ENCODE measurements at regions of chr7 and their contacts with region 1.

Region 1: DNA sequence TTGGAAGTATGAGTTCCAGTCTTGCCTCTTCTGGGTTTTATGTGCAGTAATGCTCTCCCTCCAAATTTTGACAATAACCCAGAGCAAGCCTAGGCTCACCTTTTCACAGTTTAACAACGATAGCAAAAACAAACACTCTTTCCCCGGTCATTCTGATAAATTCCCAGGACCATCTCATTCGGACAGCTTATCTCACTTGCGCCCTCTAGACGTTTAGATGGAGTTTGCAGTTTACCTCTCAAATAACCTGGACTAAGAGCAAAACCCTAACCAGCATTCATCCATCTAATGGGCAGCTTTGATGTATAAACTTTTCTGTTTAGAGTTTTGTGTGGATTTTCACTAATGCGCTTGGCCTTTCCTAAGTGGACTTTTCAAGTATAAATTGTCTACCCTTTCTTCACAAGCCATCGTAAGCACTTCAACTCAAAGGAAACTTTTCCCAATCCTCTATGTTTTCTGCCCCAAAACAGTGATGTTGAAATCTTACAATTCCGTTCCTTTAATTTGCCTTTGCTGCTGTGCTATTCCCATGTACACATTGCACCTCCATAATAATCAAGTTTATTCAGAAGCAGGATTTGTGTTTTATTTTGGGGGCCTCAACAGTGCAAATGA is 114.9 kb downstream of the HDAC9 start:
- DNase-seq: peak; percentile 38
- H3K4me3 ChIP-seq: no peak overlapping the region
- H3K27ac ChIP-seq: no peak overlapping the region
- H3K4me1 ChIP-seq: no peaks in the 10 kb centered on the region
- H3K27me3 ChIP-seq: no peaks in the 10 kb centered on the region
- CTCF ChIP-seq: peak; percentile 52 to 66
- POLR2A ChIP-seq: no peak

Region 2: DNA sequence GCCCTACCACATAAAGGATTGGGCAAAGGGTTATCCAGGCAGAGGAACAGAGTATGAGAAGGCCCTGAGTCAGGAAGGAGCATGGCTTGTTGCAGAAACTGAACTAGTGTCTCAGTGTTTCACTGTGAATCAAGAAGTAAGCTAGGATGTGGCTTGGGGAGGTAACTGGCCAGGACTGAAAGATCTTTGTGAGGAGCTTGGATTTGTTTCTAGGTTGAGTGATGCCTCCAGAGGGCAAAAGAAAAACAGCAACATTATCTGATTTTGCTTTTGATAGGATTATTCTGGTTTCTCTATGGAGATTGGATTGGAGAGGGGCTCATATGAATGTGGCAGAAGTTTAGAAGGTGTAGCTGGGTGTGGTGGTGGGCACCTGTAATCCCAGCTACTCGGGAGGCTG is 252.7 kb before region 1 on chr7:
- CTCF ChIA-PET with region 1: interaction called, 43 read pairs
- POLR2A ChIA-PET with region 1: no interaction called
- dilution Hi-C with region 1: no loop called
- intact Hi-C with region 1: loop called (anchors 1 kb)
- DNase-seq: no peak
- H3K4me3 ChIP-seq: no peak overlapping the region
- H3K27ac ChIP-seq: no peak overlapping the region
- H3K4me1 ChIP-seq: peaks cover 2% of the 10 kb centered on the region
- H3K27me3 ChIP-seq: no peaks in the 10 kb centered on the region
- CTCF ChIP-seq: peak in 1 of 2 donors; percentile 11
- POLR2A ChIP-seq: no peak

Region 3: GRCh38 chr7:18370633-18371032 is 239.8 kb before region 1 on chr7:
- CTCF ChIA-PET with region 1: no interaction called
- POLR2A ChIA-PET with region 1: no interaction called
- dilution Hi-C with region 1: no loop called
- intact Hi-C with region 1: no loop called
- DNase-seq: no peak
- H3K4me3 ChIP-seq: no peak overlapping the region
- H3K27ac ChIP-seq: no peak overlapping the region
- H3K4me1 ChIP-seq: no peaks in the 10 kb centered on the region
- H3K27me3 ChIP-seq: no peaks in the 10 kb centered on the region
- CTCF ChIP-seq: no peak
- POLR2A ChIP-seq: no peak

Measured in endothelial cell of umbilical vein (primary cell).